ENCODE measurements at regions of chr20 and their contacts with region 1.

Region 1: GRCh38 chr20:1466211-1467081 is at the start of gene NSFL1C:
- DNase-seq: peak; percentile 91 to 99 (median 96)
- ATAC-seq: peak; percentile 95 to 99 (median 98)
- H3K4me3 ChIP-seq: peak within 1 kb of the TSS; percentile 67 to 86
- H3K4me3 Mint-ChIP-seq: peak within 1 kb of the TSS; percentile 72 to 85 (median 82)
- H3K27ac ChIP-seq: peak within 1 kb of the TSS; percentile 56
- H3K27ac Mint-ChIP-seq: peak within 1 kb of the TSS; percentile 81 to 84
- H3K4me1 ChIP-seq: peaks cover 26 to 31% of the 10 kb centered on the region in 2 experiments
- H3K4me1 Mint-ChIP-seq: peaks cover 46 to 53% (median 49%) of the 10 kb centered on the region in 3 donors
- H3K27me3 ChIP-seq: peaks cover 0 to 23% of the 10 kb centered on the region in 2 experiments
- H3K27me3 Mint-ChIP-seq: peaks cover 7 to 11% of the 10 kb centered on the region in 2 donors
- total RNA-seq, gene NSFL1C: 56.7 to 68.7 (median 65.8) TPM

Region 2: DNA sequence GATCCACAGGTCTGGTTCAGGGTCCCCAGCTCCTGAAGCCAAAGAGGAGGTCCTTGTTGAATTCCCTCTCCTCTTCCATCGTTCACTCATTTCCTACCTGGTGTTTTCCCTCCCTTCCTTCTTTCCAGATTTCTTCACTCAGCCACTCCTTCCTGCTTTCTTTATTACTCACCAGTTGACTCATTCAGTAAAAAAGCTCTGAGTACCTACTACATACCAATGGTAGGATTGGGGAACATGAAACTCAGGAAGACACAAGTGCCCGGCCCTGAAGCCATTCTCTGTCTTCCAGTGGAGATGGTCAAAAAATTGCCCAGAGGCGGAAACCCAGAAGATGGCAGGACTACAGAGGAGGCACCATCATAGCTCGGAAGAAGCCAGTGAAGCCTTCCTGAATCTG is 12.1 kb after region 1 on chr20:
- CTCF ChIA-PET with region 1: no interaction called
- POLR2A ChIA-PET with region 1: no interaction called
- DNase-seq: no peak
- ATAC-seq: no peak
- H3K4me3 ChIP-seq: no peak overlapping the region
- H3K4me3 Mint-ChIP-seq: no peak overlapping the region
- H3K27ac ChIP-seq: no peak overlapping the region
- H3K27ac Mint-ChIP-seq: no peak overlapping the region
- H3K4me1 ChIP-seq: no peaks in the 10 kb centered on the region
- H3K4me1 Mint-ChIP-seq: no peaks in the 10 kb centered on the region
- H3K27me3 ChIP-seq: peaks cover 0 to 22% of the 10 kb centered on the region in 2 experiments
- H3K27me3 Mint-ChIP-seq: peaks cover 16 to 37% of the 10 kb centered on the region in 2 donors

Region 3: GRCh38 chr20:1503564-1504227 is 37.2 kb after region 1 on chr20:
- CTCF ChIA-PET with region 1: interaction called, 3 to 19 read pairs
- POLR2A ChIA-PET with region 1: no interaction called
- DNase-seq: peak; percentile 38 to 90 (median 71)
- ATAC-seq: peak; percentile 99 to 100 (median 100)
- H3K4me3 ChIP-seq: no peak overlapping the region
- H3K4me3 Mint-ChIP-seq: no peak overlapping the region
- H3K27ac ChIP-seq: no peak overlapping the region
- H3K27ac Mint-ChIP-seq: no peak overlapping the region
- H3K4me1 ChIP-seq: no peaks in the 10 kb centered on the region
- H3K4me1 Mint-ChIP-seq: peaks cover 3 to 6% (median 4%) of the 10 kb centered on the region in 3 donors
- H3K27me3 ChIP-seq: peaks cover 0 to 18% of the 10 kb centered on the region in 2 experiments
- H3K27me3 Mint-ChIP-seq: peaks cover 30 to 40% of the 10 kb centered on the region in 2 donors

Region 4: DNA sequence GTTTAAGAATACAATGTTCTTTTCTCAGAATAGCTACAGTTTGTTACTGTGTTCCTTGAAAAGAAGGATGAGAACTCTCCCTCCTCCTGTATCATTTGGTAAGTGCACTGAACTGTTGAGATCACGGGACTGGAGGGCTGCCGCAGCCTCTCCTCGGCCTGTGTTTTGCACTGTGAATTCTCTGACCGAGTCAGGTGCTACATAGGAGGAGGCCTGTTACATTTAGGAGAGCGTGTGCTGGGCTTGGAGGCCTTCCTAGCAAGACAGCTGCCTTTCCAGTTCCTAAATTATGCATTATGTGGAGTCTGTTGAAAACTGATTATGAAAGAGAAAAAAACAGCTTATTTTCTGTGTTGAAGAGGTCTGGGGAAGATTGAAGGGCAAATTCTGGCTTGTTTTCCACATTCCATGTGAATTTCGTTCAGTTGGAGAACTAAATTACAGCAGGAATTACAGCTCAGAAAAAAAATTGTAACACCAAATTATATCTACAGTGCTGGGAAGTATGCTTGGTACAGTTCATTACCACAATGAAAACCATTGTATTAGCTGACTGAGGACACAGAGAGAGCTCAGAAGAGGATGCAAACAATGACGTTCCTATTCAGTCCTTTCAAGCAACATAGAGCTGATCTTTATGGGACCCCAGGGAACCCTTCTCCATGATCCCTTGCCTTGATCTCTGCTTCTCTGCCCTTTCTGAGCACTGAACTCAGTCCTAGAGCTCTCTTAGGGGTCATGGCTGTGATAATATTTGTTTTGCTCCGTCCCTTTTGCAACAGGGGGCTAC is 1072.7 kb after region 1 on chr20:
- CTCF ChIA-PET with region 1: interaction called in 1 of 2 experiments, 12 read pairs
- POLR2A ChIA-PET with region 1: no interaction called
- DNase-seq: no peak
- ATAC-seq: no peak
- H3K4me3 ChIP-seq: no peak overlapping the region
- H3K4me3 Mint-ChIP-seq: no peak overlapping the region
- H3K27ac ChIP-seq: no peak overlapping the region
- H3K27ac Mint-ChIP-seq: no peak overlapping the region
- H3K4me1 ChIP-seq: no peaks in the 10 kb centered on the region
- H3K4me1 Mint-ChIP-seq: no peaks in the 10 kb centered on the region
- H3K27me3 ChIP-seq: peaks cover 12 to 46% of the 10 kb centered on the region in 2 experiments
- H3K27me3 Mint-ChIP-seq: peaks cover 35 to 37% of the 10 kb centered on the region in 2 donors

Measured in T-cell (primary cell).